H1 (cell line): ENCODE measurements at regions of chr22 and their contacts with region 1.

Region 1: DNA sequence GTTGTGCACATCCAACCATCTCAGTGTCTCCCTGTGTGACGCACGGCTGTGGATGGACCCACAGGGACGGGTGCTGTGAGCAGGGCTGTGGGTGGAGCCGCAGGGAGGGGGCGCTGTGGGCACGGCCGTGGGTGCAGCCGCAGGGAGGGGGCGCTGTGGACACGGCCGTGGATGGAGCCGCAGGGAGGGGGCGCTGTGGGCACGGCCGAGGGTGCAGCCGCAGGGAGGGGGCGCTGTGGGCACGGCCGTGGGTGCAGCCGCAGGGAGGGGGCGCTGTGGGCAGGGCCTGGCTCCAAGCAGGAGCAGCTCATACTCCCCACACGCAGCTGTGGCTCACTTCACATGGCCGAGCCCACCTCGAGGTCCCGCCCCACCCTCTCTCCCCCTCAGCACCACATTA is 6.0 kb upstream of the MAPK11 start:
- DNase-seq: peak in 1 of 2 experiments; percentile 77
- H3K4me3 ChIP-seq: no peak overlapping the region
- H3K27ac ChIP-seq: no peak overlapping the region
- H3K4me1 ChIP-seq: peaks cover under 1 to 8% (median 4%) of the 10 kb centered on the region in 4 experiments; a peak in 4 of 7 replicates
- H3K27me3 ChIP-seq: peaks cover under 1 to 5% (median 4%) of the 10 kb centered on the region in 4 experiments; a peak in 5 of 7 replicates
- CTCF ChIP-seq: peak; percentile 79 to 99 (median 91)
- EP300 ChIP-seq: no peak
- POLR2A ChIP-seq: no peak
- RAD21 ChIP-seq: peak in 1 of 2 experiments; percentile 36; a peak in 3 of 4 replicates

Region 2: DNA sequence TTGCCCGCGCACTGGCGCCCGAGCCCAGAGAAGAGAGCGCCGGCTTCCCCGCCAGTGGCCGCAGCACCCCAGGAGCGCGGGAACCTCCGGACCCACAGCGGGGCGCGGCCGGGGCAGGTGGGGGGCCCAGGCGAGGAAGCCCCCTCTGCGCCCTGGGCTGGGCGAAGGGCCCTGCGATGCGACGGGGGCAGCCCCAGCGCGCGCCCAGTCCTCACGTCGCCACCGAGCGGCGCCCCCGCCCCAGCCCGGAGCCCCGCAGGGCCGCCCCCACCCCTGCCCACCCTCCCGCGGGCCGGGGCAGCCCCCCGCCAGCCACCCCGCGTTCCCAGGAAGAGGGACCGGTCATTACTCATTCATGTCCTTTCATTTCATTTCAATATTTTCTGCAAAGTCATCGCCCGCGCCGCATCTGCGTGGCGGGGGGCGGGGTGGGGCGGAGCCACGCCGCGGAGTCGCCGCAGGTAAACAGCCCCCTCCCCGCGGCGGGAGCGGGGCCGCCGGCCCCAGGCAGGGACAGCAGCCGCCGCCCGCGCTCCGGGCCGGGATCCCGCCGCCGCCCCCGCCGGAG is 106.3 kb before region 1 on chr22:
- CTCF ChIA-PET with region 1: no interaction called
- POLR2A ChIA-PET with region 1: no interaction called
- DNase-seq: no peak
- H3K4me3 ChIP-seq: peak overlapping the region in 2 of 4 experiments; percentile 52 to 55; a peak in 5 of 8 replicates
- H3K27ac ChIP-seq: no peak overlapping the region
- H3K4me1 ChIP-seq: peaks cover 0 to 9% (median 0%) of the 10 kb centered on the region in 4 experiments; a peak in 2 of 7 replicates
- H3K27me3 ChIP-seq: peaks cover 4 to 25% (median 16%) of the 10 kb centered on the region in 4 experiments
- CTCF ChIP-seq: no peak
- EP300 ChIP-seq: no peak
- POLR2A ChIP-seq: no peak
- RAD21 ChIP-seq: no peak

Region 3: GRCh38 chr22:50260801-50261614 is 15.1 kb before region 1 on chr22:
- CTCF ChIA-PET with region 1: interaction called, 26 read pairs
- POLR2A ChIA-PET with region 1: interaction called, 3 read pairs
- DNase-seq: peak in 1 of 2 experiments; percentile 72
- H3K4me3 ChIP-seq: peak overlapping the region; percentile 35 to 73 (median 48)
- H3K27ac ChIP-seq: no peak overlapping the region
- H3K4me1 ChIP-seq: peaks cover 0 to 20% (median 10%) of the 10 kb centered on the region in 4 experiments; a peak in 6 of 7 replicates
- H3K27me3 ChIP-seq: peaks cover 1 to 22% (median 18%) of the 10 kb centered on the region in 4 experiments; a peak in 6 of 7 replicates
- CTCF ChIP-seq: no peak
- EP300 ChIP-seq: no peak
- POLR2A ChIP-seq: no peak
- RAD21 ChIP-seq: no peak

Region 4: GRCh38 chr22:50298937-50299656 is 23.0 kb after region 1 on chr22:
- CTCF ChIA-PET with region 1: interaction called, 16 read pairs
- POLR2A ChIA-PET with region 1: interaction called, 5 read pairs
- DNase-seq: no peak
- H3K4me3 ChIP-seq: peak overlapping the region in 3 of 4 experiments; percentile 30 to 68 (median 35); a peak in 5 of 8 replicates
- H3K27ac ChIP-seq: no peak overlapping the region
- H3K4me1 ChIP-seq: peaks cover 0 to 35% (median 20%) of the 10 kb centered on the region in 4 experiments; a peak in 6 of 7 replicates
- H3K27me3 ChIP-seq: no peaks in the 10 kb centered on the region; a peak in 2 of 7 replicates
- CTCF ChIP-seq: no peak
- EP300 ChIP-seq: no peak
- POLR2A ChIP-seq: no peak
- RAD21 ChIP-seq: no peak

Region 5: DNA sequence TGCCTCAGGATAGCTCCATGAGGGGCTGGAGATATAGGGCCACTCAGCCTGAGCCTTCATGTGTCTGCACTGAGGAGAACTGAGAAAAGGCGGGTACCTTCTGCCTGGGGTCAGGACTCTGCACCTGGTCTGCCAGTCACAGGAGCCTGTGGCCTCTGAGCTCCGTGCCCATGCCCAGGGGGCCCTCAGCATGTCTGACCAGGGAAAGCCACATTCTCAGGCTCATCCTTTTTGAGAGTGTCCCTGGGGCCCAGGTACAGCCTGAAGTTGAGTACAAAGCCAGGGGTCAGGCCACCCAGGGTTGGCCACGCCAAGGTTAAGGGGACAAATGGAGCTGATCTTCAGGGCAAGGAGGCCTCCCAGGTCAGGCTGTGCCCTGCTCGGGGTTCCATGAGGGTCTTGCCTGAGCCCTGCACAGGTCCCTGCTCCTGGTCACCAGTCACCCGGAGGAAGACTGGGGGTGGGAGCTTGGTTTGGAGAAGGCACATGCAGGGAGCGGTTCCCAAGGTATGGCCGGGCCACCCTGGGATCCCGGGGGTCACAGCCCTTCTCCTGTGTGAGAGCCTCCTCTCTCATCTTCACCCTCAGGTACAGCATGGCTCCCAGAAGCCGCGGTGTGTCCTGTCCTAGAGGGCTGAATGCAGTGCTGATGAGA is 44.7 kb after region 1 on chr22:
- CTCF ChIA-PET with region 1: interaction called, 24 read pairs
- POLR2A ChIA-PET with region 1: interaction called, 4 read pairs
- DNase-seq: no peak
- H3K4me3 ChIP-seq: no peak overlapping the region
- H3K27ac ChIP-seq: no peak overlapping the region
- H3K4me1 ChIP-seq: no peaks in the 10 kb centered on the region; a peak in 1 of 7 replicates
- H3K27me3 ChIP-seq: peaks cover 0 to 3% (median 2%) of the 10 kb centered on the region in 4 experiments; a peak in 5 of 7 replicates
- CTCF ChIP-seq: no peak
- EP300 ChIP-seq: no peak
- POLR2A ChIP-seq: no peak
- RAD21 ChIP-seq: no peak

Region 6: DNA sequence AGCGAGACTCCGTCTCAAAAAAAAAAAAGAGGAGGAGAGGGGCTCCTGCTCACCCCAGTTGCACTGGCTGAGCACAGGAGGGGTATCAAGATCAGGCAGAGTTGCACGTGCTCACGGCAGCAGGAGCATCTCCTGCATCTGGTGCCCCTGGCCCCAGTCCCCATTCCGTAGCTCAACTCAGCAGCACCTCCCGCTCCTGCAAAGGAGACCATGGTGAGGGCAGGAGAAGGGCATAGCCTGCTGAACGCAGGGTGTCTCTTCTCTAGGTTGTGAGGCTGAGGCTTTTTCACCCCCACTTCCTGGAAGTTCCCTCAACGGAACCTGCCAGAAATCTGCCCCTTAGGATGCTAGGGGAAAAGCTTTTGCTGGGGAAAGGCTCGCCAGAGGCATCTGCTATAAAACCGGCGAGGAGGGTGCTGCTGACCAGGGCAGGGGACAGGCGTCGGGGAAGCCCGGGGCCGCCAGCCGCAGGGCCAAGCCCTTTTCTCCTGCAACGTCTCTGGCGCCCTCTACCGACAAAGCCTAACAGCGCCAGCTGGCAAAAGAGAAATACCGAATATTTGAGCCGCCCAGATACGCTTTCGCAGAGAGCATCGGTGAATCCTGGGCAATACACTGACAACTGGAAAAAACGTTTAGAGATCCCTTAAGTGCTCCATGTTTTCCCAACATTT is 66.0 kb after region 1 on chr22:
- CTCF ChIA-PET with region 1: interaction called, 39 read pairs
- POLR2A ChIA-PET with region 1: interaction called, 12 read pairs
- DNase-seq: peak; percentile 51 to 96
- H3K4me3 ChIP-seq: peak overlapping the region; percentile 44 to 94 (median 68)
- H3K27ac ChIP-seq: no peak overlapping the region
- H3K4me1 ChIP-seq: peaks cover 0 to 2% (median under 1%) of the 10 kb centered on the region in 4 experiments; a peak in 3 of 7 replicates
- H3K27me3 ChIP-seq: peaks cover 0 to 5% (median 0%) of the 10 kb centered on the region in 4 experiments; a peak in 3 of 7 replicates
- CTCF ChIP-seq: peak; percentile 80 to 99 (median 95)
- EP300 ChIP-seq: peak in 1 of 2 experiments; percentile 43; a peak in 1 of 3 replicates
- POLR2A ChIP-seq: no peak; a peak in 1 of 3 replicates
- RAD21 ChIP-seq: peak; percentile 83 to 93